Transverse colon (tissue), 4 donors: ENCODE measurements at regions of chr1 and their contacts with region 1.

Region 1: GRCh38 chr1:201176940-201177339 is 13.7 kb upstream of the IGFN1 start:
- DNase-seq: peak; percentile 30
- H3K4me3 ChIP-seq: no peak overlapping the region
- H3K27ac ChIP-seq: no peak overlapping the region
- H3K4me1 ChIP-seq: no peaks in the 10 kb centered on the region
- H3K27me3 ChIP-seq: no peaks in the 10 kb centered on the region
- CTCF ChIP-seq: no peak
- EP300 ChIP-seq: no peak
- POLR2A ChIP-seq: no peak

Region 2: GRCh38 chr1:200951016-200951415 is 225.9 kb before region 1 on chr1:
- in situ Hi-C with region 1: no loop called
- intact Hi-C with region 1: no loop called
- DNase-seq: no peak
- H3K4me3 ChIP-seq: no peak overlapping the region
- H3K27ac ChIP-seq: no peak overlapping the region
- H3K4me1 ChIP-seq: no peaks in the 10 kb centered on the region
- H3K27me3 ChIP-seq: no peaks in the 10 kb centered on the region
- CTCF ChIP-seq: no peak
- EP300 ChIP-seq: no peak
- POLR2A ChIP-seq: no peak

Region 3: DNA sequence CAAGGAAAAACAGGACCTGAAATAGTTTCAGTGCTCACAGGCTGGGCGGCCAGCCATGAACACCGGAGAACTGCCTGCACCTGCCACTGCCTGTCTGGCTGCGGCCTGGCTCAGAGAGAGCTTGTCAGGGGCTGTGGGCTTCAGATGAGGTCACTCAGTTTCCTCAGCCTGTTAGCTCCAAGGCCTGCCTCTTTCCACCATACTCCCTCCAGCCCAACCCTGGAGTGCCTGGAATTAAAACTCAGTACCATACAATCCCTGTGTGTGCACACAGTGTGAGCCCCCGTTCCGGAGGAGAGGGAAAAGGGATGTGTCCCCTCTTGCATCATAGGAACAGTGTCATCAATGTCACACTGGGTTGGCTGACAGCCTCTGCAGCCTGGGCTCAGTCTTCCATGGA is 80.9 kb before region 1 on chr1:
- in situ Hi-C with region 1: no loop called
- intact Hi-C with region 1: no loop called
- DNase-seq: no peak
- H3K4me3 ChIP-seq: no peak overlapping the region
- H3K27ac ChIP-seq: no peak overlapping the region
- H3K4me1 ChIP-seq: no peaks in the 10 kb centered on the region
- H3K27me3 ChIP-seq: no peaks in the 10 kb centered on the region
- CTCF ChIP-seq: no peak
- EP300 ChIP-seq: no peak
- POLR2A ChIP-seq: no peak

Region 4: DNA sequence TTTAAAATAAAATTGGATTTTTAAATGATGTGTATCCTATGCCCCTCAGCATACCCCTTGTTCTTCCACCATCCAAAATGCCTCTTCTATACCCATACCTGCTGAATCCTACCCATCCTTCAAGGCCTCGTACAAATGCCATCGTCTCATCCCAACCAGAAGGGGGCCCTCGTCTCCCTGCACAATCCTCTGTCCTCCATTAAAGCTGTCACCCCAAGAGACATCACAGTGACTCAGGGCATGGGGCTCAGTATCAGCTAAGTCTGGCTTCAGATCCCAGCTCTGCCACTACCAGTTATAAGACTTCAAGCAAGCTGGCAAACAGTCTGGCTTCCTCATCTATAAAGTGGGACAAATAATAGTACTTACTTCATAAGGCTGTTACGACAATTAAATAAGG is 37.5 kb after region 1 on chr1:
- in situ Hi-C with region 1: no loop called
- intact Hi-C with region 1: loop called (anchors 1 kb)
- DNase-seq: no peak
- H3K4me3 ChIP-seq: no peak overlapping the region
- H3K27ac ChIP-seq: no peak overlapping the region
- H3K4me1 ChIP-seq: no peaks in the 10 kb centered on the region
- H3K27me3 ChIP-seq: peaks cover 11% of the 10 kb centered on the region
- CTCF ChIP-seq: no peak
- EP300 ChIP-seq: no peak
- POLR2A ChIP-seq: no peak